Cardiac septum (tissue), 1 donor: ENCODE measurements at regions of chr1 and their contacts with region 1.

Region 1: GRCh38 chr1:15847100-15847892 is at the start of gene SPEN:
- DNase-seq: peak; percentile 99
- total RNA-seq, gene SPEN: 37.8 TPM

Region 2: DNA sequence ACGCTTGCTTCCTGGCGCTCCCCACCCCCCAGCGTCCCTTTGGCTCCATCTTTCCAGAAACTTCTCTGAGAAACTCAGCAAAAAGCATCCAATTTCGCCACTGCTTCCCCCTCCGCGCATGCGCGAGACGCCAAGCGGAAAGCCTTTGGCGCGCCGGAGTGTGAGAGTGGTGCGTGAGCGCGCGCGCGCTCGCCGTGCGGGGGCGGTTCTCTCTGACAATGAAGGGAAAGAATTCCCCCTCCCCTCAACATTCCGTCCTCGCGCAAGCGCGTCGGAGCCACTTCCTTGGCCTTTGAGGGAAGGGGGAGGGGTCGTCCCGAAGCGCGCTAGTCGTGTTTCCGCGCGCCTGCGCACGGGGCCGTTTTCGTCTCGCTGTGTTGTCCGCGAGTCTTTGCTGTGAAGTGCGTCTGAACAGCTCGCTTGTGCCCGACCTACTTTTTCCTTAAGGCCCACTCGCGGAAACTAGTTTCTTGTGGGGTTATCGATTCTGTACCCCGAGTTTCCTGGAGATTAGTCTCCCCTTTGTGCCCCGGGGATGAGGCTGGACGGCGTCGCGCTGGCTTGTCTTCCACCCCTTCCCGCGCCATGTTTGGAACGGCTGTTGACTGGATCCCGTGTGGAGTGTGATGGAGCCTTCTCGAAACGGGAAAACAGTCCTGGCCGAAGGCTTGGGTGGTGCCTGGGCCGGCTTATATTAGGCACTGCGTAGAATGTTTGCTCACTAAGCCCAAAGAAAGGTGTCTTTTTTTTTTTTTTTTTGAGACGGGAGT is 11.4 kb before region 1 on chr1:
- intact Hi-C with region 1: loop called (anchors 1 kb)
- DNase-seq: peak; percentile 100

Region 3: GRCh38 chr1:15949453-15950245 is 102.4 kb after region 1 on chr1:
- intact Hi-C with region 1: loop called (anchors 5 kb)
- DNase-seq: peak; percentile 91